ENCODE measurements at regions of chr9 and their contacts with region 1.

Region 1: DNA sequence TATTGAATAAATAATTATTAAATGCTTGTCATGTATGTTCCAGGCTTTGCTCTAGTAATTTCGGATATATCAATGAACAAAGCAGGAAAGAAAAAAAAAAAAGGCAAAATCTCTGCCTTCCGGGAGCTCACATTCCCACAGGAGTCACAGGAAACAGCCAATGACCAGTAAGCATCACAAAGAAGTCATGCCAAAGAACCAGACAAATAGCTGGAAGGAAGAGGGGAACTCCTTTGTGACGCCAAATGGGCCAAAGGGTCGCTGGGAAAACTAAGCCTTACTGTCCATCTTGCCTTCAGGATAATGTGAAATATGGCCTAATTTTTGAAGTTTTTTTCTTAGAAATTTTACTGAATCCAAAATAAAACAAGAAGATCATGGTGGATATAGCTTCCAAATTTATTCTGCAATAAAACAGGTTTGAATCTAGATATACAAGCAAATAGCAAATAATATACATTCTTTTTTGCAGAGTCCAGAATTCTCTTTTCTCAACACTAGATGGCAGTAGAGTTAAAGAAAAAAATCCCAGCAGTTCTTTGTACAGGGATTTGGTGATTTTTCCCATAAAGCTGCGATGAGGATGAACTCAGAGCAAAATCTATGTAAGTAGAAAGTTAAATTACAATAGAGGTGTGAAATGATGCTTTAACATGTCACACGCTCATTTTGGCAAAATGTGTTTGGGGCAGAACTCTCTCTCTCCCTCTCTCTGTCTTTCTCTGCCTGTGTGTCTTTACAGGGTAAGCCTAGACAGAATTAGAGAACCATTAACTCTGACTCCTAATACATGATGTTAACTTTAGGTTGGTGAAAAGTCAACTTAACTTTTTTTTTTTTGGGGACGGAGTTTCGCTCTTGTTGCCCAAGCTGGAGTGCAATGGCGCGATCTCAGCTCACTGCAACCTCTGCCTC is 60.0 kb upstream of the TUT7 start:
- DNase-seq: no peak
- H3K4me3 ChIP-seq: no peak overlapping the region
- H3K27ac ChIP-seq: no peak overlapping the region
- H3K27me3 ChIP-seq: no peaks in the 10 kb centered on the region
- CTCF ChIP-seq: peak; percentile 59

Region 2: DNA sequence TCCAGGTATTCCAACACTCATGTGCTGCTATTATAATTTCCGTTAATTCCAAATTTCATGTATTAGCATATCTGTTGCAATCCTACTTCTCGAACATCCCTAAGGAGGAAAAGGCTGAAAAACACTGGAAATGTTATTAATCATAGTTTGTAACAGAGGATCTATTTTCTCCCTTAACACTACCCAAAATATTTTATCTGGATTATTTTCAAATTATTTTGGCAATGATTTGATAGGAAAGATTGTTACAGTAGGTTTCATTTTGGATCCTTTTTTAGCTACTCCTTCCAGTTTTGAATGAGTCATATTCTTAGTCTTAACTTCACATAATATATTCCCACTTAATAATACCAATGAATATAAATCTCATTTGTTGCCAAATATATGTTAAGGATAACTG is 487.1 kb before region 1 on chr9:
- CTCF ChIA-PET with region 1: interaction called, 10 read pairs
- POLR2A ChIA-PET with region 1: no interaction called
- DNase-seq: no peak
- H3K4me3 ChIP-seq: no peak overlapping the region
- H3K27ac ChIP-seq: no peak overlapping the region
- H3K27me3 ChIP-seq: no peaks in the 10 kb centered on the region
- CTCF ChIP-seq: no peak

Region 3: DNA sequence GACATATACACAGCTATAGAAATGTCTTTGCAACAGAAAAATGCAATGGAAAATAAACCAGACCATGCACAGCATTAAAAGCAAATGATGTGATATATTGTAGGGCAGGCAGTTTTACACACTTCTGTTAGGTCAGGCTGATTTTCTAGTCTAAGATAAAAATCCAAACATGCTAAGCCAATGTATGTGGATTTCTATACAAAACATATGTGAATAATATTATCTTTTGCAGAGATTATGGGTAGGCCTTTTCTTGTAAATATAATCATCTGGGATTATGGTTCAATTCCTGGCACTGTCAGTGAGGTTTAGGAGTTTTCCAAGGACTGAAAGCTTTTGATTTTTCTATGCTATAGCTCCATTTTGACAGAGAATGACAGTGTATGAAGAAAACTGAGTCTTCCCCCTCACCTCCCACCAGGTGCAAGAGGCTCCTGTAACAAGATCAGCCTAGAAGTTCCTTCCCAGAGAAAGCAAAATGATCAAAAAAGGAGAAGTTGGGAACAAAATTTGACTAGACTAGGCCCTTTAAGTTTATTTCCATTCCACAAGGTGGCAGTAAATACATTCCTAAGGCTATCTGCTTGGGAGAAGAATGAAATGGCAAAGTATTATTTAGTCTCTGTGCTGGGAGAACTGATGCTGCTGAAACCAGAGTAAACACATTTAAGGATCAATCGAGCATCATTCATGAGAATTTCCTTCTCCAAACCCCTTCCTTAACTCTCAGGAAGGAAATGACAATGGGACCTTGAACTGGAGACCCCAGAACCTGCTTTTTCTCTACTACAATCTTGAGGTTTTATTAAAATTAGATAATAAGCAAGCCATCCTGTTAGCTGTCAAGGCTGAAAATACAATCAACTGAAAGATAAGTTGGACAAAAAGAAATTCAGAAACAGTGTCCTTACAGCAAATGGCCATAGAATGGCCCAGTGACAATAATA is 72.9 kb after region 1 on chr9:
- CTCF ChIA-PET with region 1: interaction called, 20 read pairs
- POLR2A ChIA-PET with region 1: no interaction called
- DNase-seq: no peak
- H3K4me3 ChIP-seq: no peak overlapping the region
- H3K27ac ChIP-seq: no peak overlapping the region
- H3K27me3 ChIP-seq: no peaks in the 10 kb centered on the region
- CTCF ChIP-seq: peak; percentile 75

Region 4: GRCh38 chr9:86948074-86948929 is 534.1 kb after region 1 on chr9:
- CTCF ChIA-PET with region 1: interaction called, 11 read pairs
- POLR2A ChIA-PET with region 1: no interaction called
- DNase-seq: peak; percentile 50
- H3K4me3 ChIP-seq: peak overlapping the region; percentile 86
- H3K27ac ChIP-seq: peak overlapping the region; percentile 4
- H3K27me3 ChIP-seq: peaks cover 12% of the 10 kb centered on the region
- CTCF ChIP-seq: peak; percentile 94

Region 5: DNA sequence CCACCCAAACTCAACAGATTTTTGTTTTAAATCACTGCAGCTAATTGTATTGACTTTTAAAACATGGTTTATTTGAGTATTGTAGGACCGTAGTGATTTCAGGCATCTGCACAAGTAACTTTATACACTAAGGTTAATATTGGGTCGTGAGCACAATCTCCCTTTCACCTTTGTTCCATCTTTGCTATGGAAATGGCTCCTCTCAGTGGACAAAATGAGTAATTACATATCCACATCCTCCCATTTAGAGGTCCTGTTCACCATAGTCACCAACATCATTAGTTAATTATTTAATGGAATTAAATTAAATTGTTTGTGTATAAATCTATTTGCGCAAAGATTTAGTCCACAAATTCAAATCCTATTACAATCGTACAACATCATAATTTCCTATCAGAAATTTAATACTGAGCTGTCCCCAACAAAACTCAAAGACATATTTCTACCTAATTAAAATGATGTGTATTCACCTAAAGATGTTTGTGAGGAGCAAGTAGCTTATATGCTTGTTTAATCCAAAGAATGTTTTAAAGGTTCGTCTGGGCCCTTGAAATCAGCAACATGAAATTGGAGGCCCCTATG is 910.5 kb after region 1 on chr9:
- CTCF ChIA-PET with region 1: interaction called, 101 read pairs
- POLR2A ChIA-PET with region 1: interaction called, 3 read pairs
- DNase-seq: peak; percentile 20
- H3K4me3 ChIP-seq: no peak overlapping the region
- H3K27ac ChIP-seq: no peak overlapping the region
- H3K27me3 ChIP-seq: no peaks in the 10 kb centered on the region
- CTCF ChIP-seq: peak; percentile 72

Region 6: DNA sequence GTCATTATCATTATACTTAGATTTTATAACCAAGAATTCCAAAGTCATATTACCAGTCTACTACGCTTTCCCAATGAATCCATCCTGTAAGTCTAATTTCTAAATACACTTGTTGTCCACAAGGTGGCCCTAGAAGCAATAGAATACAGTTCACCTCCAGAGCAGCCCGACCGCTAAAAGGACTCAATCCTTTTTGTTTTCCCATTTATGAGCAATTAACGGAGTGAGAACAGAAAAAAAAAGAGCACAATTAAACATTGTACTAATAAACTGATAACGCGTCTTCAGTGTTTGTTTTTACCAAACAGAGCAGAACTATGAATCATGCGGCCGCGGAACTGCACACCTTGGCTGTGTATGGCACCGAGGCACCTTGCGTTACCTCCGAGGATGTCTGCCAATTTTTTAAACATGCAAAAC is 922.7 kb after region 1 on chr9:
- CTCF ChIA-PET with region 1: interaction called, 10 read pairs
- POLR2A ChIA-PET with region 1: no interaction called
- DNase-seq: peak; percentile 38
- H3K4me3 ChIP-seq: no peak overlapping the region; the same call in none of the 2 replicates
- H3K27ac ChIP-seq: no peak overlapping the region
- H3K27me3 ChIP-seq: peaks cover 8% of the 10 kb centered on the region
- CTCF ChIP-seq: peak; percentile 67

Region 7: GRCh38 chr9:87662808-87663528 is 1248.7 kb after region 1 on chr9:
- CTCF ChIA-PET with region 1: interaction called, 12 read pairs
- POLR2A ChIA-PET with region 1: no interaction called
- DNase-seq: no peak
- H3K4me3 ChIP-seq: no peak overlapping the region
- H3K27ac ChIP-seq: no peak overlapping the region
- H3K27me3 ChIP-seq: no peaks in the 10 kb centered on the region
- CTCF ChIP-seq: peak; percentile 75